Activated CD8-positive, alpha-beta T cell treated with anti-CD3 and anti-CD28 coated beads for 36 hours (primary cell): ENCODE measurements at regions of chr9 and their contacts with region 1.

Region 1: GRCh38 chr9:79946712-79947111 is 374.9 kb downstream of the TLE4 start:
- DNase-seq: no peak
- ATAC-seq: no peak
- H3K4me3 Mint-ChIP-seq: no peak overlapping the region
- H3K27ac Mint-ChIP-seq: no peak overlapping the region
- H3K4me1 Mint-ChIP-seq: no peaks in the 10 kb centered on the region
- H3K27me3 Mint-ChIP-seq: no peaks in the 10 kb centered on the region
- CTCF ChIP-seq: no peak

Region 2: DNA sequence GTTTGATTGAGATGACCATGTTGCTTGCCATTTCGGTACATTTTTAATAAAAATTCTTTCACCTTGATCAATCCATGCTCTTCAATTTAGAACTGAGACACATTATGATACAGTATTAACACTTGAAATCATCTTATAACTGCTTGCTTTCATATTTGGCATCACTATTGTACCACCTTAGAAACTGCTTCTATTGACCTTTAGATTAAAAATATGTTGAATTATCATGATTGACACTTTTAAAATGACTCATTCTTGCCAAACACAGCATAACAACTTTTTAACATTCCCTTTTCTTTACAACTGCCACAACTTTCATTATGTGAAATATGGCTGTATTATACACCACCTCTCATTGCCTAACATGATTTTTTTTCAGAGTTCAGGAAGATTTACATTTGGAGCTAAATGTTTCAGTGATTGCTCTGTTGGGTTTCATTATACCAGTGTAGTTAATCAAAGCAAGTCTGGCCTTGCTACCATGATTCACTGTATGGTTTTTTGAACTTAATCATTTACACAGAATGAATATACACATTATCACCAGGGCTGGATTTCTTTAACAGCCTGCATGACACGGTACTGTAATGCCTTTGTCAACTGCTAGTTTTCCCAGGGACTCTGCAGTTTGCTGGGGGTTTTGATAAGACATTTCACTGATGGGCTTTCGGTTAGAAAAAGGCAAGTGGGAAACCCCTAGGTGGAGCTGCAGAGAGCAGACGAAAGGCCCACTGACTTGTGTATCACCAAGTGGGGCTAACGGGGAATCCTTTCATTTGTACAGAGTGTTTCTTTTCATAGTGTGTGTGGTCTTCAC is 468.5 kb before region 1 on chr9:
- CTCF ChIA-PET with region 1: no interaction called
- POLR2A ChIA-PET with region 1: no interaction called
- intact Hi-C with region 1: loop called (anchors 10 kb)
- DNase-seq: peak; percentile 61
- ATAC-seq: peak; percentile 89
- H3K4me3 Mint-ChIP-seq: no peak overlapping the region
- H3K27ac Mint-ChIP-seq: peak overlapping the region; percentile 72
- H3K4me1 Mint-ChIP-seq: peaks cover 16% of the 10 kb centered on the region
- H3K27me3 Mint-ChIP-seq: no peaks in the 10 kb centered on the region
- CTCF ChIP-seq: peak; percentile 52

Region 3: GRCh38 chr9:79776596-79776995 is 170.1 kb before region 1 on chr9:
- CTCF ChIA-PET with region 1: no interaction called
- POLR2A ChIA-PET with region 1: no interaction called
- intact Hi-C with region 1: no loop called
- DNase-seq: no peak
- ATAC-seq: no peak
- H3K4me3 Mint-ChIP-seq: no peak overlapping the region
- H3K27ac Mint-ChIP-seq: no peak overlapping the region
- H3K4me1 Mint-ChIP-seq: no peaks in the 10 kb centered on the region
- H3K27me3 Mint-ChIP-seq: no peaks in the 10 kb centered on the region
- CTCF ChIP-seq: no peak

Region 4: GRCh38 chr9:79924836-79925235 is 21.9 kb before region 1 on chr9:
- CTCF ChIA-PET with region 1: no interaction called
- POLR2A ChIA-PET with region 1: no interaction called
- intact Hi-C with region 1: no loop called
- DNase-seq: no peak
- ATAC-seq: no peak
- H3K4me3 Mint-ChIP-seq: no peak overlapping the region
- H3K27ac Mint-ChIP-seq: no peak overlapping the region
- H3K4me1 Mint-ChIP-seq: no peaks in the 10 kb centered on the region
- H3K27me3 Mint-ChIP-seq: no peaks in the 10 kb centered on the region
- CTCF ChIP-seq: no peak